Adrenal gland (tissue), 19 donors: ENCODE measurements at regions of chr2 and their contacts with region 1.

Region 1: DNA sequence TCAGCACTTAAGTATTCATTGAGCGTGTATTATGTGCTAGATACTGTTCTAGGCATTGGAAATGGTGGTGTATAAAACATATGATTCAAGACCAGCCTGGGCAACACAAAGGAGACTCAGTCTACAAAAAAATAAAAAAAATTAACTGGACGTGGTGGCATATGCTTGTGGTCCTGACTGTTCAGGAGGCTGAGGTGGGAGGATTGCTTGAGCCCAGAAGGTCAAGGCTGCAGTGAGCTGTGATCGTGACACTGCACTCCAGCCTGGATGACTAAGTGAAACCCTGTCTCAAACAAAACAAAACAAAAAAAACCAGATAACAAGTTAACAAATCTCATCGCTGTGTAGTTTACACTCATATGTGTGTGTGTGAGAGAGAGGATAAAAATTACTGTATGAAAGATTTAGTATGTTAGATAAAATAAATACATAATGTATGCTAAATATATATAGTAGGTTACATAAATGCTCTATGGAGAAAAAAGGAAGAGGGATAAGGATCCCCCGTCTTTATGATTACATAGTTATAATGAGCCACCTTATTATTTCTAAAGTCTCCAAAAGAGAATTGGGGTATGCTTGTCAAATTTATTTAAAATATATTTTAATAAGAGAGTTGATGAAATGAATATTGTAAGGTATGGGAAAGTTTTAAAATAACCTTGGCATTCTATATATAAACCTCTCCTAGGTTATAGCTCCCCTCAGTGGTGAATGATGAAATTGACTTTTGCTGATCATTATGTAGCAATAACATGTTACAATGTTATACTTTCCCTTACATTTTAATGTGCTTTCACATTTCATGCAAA is 69.2 kb downstream of the EHBP1 start:
- DNase-seq: peak; percentile 40 to 74 (median 73)
- H3K4me3 ChIP-seq: no peak overlapping the region
- H3K27ac ChIP-seq: peak overlapping the region in 1 of 5 donors; percentile 50
- H3K4me1 ChIP-seq: peaks cover 3 to 17% of the 10 kb centered on the region in 2 donors
- H3K27me3 ChIP-seq: no peaks in the 10 kb centered on the region
- CTCF ChIP-seq: peak; percentile 62 to 94 (median 84)
- POLR2A ChIP-seq: no peak

Region 2: GRCh38 chr2:62456721-62457539 is 317.8 kb before region 1 on chr2:
- intact Hi-C with region 1: loop called (anchors 2 to 5 kb)
- DNase-seq: peak; percentile 64 to 80 (median 73)
- H3K4me3 ChIP-seq: peak overlapping the region; percentile 58 to 89 (median 70)
- H3K27ac ChIP-seq: peak overlapping the region in 4 of 5 donors; percentile 44 to 83 (median 68)
- H3K4me1 ChIP-seq: peaks cover 0 to 9% of the 10 kb centered on the region in 2 donors
- H3K27me3 ChIP-seq: no peaks in the 10 kb centered on the region
- CTCF ChIP-seq: peak; percentile 84 to 99 (median 98)
- POLR2A ChIP-seq: no peak

Region 3: GRCh38 chr2:62641410-62641843 is 133.3 kb before region 1 on chr2:
- intact Hi-C with region 1: loop called in 1 of 2 experiments (anchors 10 kb)
- DNase-seq: no peak
- H3K4me3 ChIP-seq: peak overlapping the region in 1 of 4 donors; percentile 11
- H3K27ac ChIP-seq: peak overlapping the region; percentile 1 to 59 (median 57)
- H3K4me1 ChIP-seq: peaks cover 0 to 16% of the 10 kb centered on the region in 2 donors
- H3K27me3 ChIP-seq: no peaks in the 10 kb centered on the region
- CTCF ChIP-seq: no peak
- POLR2A ChIP-seq: peak in 1 of 2 donors; percentile 8